Activated CD4-positive, alpha-beta T cell treated with anti-CD3 and anti-CD28 coated beads, Interleukin-2, amount 10 ng/mL, durations not matched to agents 24 days and 14 days (primary cell): ENCODE measurements at regions of chr13 and their contacts with region 1.

Region 1: GRCh38 chr13:91375116-91375729 is 23.2 kb upstream of the GPC5 start:
- DNase-seq: peak; percentile 69
- H3K4me3 Mint-ChIP-seq: no peak overlapping the region
- H3K27ac Mint-ChIP-seq: no peak overlapping the region
- H3K4me1 Mint-ChIP-seq: peaks cover 2% of the 10 kb centered on the region
- H3K27me3 Mint-ChIP-seq: peaks cover 2% of the 10 kb centered on the region

Region 2: GRCh38 chr13:91247768-91248167 is 127.5 kb before region 1 on chr13:
- intact Hi-C with region 1: no loop called
- DNase-seq: no peak
- H3K4me3 Mint-ChIP-seq: no peak overlapping the region
- H3K27ac Mint-ChIP-seq: no peak overlapping the region
- H3K4me1 Mint-ChIP-seq: no peaks in the 10 kb centered on the region
- H3K27me3 Mint-ChIP-seq: peaks cover 5% of the 10 kb centered on the region

Region 3: GRCh38 chr13:91313103-91313502 is 62.1 kb before region 1 on chr13:
- intact Hi-C with region 1: no loop called
- DNase-seq: peak; percentile 77
- H3K4me3 Mint-ChIP-seq: peak overlapping the region; percentile 52
- H3K27ac Mint-ChIP-seq: no peak overlapping the region
- H3K4me1 Mint-ChIP-seq: peaks cover 22% of the 10 kb centered on the region
- H3K27me3 Mint-ChIP-seq: peaks cover 14% of the 10 kb centered on the region

Region 4: DNA sequence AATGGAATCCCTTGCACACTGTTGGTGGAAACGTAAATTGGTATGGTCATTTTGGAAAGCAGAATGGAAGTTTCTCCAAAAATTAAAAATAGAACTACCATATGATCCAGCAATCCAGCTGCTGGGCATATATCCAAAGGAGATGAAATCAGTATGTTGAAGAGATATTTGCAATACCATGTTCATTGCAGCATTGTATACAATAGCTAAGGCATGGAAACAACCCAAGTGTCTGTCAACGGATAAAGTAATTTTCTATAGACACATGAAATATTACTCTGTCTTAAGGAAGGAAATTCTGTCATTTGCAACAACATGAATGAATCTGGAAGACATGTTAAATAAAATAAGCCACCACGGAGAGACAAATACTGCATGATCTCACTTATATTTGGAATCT is 147.9 kb after region 1 on chr13:
- intact Hi-C with region 1: no loop called
- DNase-seq: no peak
- H3K4me3 Mint-ChIP-seq: no peak overlapping the region
- H3K27ac Mint-ChIP-seq: no peak overlapping the region
- H3K4me1 Mint-ChIP-seq: no peaks in the 10 kb centered on the region
- H3K27me3 Mint-ChIP-seq: no peaks in the 10 kb centered on the region

Region 5: DNA sequence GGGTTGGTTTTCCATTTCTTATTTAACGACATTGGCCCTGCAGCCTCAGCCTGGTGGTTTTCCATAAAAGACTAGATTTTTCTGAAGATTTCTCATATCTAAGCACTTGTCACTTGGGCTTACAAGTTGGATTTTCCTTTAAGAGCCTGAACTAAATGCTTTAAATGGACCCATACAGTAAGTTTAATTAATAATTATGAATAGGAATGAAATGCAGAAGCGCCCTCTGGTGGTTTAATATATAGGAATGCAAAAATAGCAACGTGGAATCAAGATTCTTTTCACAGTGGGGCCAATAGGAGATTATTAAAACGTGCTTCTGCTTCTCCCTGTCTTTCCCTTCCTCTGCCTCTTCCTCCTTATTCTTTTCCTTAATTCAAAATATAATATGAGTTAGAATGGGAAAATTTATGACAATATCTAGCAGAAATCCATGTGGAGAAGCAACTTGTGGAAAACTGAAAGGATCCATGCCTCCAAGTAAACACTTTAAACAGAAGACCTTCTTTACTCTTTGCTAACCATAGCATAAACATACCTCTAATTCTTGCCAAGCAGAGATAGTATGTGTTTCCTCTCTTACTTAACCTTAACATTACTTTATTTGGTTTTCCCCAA is 347.2 kb after region 1 on chr13:
- intact Hi-C with region 1: loop called (anchors 2 kb)
- DNase-seq: no peak
- H3K4me3 Mint-ChIP-seq: no peak overlapping the region
- H3K27ac Mint-ChIP-seq: no peak overlapping the region
- H3K4me1 Mint-ChIP-seq: no peaks in the 10 kb centered on the region
- H3K27me3 Mint-ChIP-seq: no peaks in the 10 kb centered on the region